Sigmoid colon (tissue), 7 donors: ENCODE measurements at regions of chr19 and their contacts with region 1.

Region 1: DNA sequence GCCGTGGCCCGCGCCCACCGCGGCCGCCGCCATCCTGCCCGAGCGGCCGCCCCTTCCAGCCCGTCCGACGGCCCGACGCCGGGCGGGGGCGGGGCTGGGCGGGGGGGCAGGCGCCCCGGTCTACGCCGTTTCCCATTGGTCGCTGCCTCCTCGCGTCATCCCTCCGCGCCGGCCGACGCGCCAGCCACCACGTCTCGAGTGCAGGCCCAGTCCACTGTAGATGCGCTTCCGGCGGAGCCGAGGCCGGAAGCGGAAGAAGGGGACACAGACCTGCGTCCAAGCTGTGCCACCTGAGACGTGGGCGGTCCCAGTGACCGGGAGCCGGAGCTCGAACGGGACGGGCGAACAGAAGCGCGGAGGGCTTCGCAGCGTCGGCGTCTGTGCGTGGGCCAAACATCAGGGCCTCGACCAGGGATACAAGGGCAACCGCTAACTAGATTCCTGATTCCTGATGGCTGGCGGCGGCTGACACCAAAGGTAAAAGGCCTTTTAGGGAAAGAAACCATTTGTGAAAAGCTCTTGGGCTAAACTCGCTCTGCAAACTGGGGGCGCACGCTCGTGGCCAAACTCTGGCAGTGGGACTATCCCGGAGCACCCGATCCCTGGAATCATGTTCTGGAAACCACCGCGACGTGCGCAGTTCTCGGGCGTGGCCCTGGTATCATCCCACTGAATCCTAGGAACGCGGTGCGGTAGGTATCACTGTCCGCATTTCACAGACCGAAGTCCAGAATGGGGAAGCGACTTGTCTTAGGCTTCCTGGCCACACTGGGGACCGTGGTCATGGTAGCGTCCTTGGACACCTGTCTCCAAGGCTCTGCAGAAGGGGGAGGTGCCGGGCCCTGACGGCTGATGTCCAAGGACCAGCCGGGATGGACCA is at the start of gene SLC35E1:
- DNase-seq: peak; percentile 98
- H3K4me3 ChIP-seq: peak within 1 kb of the TSS; percentile 69 to 97 (median 92)
- H3K27ac ChIP-seq: peak within 1 kb of the TSS; percentile 83 to 92 (median 89)
- H3K4me1 ChIP-seq: peaks cover 0 to 44% (median 37%) of the 10 kb centered on the region in 4 donors
- H3K27me3 ChIP-seq: no peaks in the 10 kb centered on the region
- CTCF ChIP-seq: no peak
- EP300 ChIP-seq: peak in 1 of 4 donors; percentile 79
- POLR2A ChIP-seq: peak; percentile 80
- total RNA-seq, gene SLC35E1: 20.3 to 27.4 (median 23.1) TPM

Region 2: DNA sequence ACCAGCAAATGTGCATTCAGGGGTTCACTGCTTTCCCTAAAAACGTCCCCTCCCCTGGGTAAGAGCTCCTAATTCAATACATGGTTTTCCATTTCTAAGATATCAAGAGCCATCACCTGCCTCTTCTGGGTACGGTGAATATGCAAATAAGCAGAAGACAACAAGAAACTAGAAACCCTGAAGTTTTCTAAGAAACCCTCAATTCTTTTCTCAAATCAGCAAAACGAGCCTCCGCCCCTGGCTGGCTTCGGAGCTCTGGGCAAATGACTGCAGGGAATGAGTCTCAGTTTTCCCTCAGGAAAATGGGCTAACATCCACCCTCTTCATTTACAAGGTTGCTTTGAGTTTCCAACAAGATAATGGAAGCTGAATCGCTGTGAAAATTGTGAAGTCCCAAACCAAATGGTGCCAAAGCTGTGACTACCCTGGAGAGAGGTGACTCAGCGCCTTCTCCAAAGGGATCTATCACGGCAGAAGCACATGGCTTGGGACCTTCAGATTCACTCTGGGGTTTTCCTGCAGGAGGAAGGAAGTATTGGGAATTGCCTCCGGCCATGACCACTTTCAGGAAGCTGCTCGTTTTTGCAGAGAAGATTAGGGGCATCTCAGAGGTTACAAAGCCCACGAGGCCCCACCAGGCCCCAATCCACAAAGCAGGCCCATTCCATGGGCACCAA is 221.3 kb before region 1 on chr19:
- intact Hi-C with region 1: no loop called
- DNase-seq: no peak
- H3K4me3 ChIP-seq: no peak overlapping the region
- H3K27ac ChIP-seq: no peak overlapping the region
- H3K4me1 ChIP-seq: no peaks in the 10 kb centered on the region
- H3K27me3 ChIP-seq: no peaks in the 10 kb centered on the region
- CTCF ChIP-seq: no peak
- EP300 ChIP-seq: no peak
- POLR2A ChIP-seq: no peak

Region 3: DNA sequence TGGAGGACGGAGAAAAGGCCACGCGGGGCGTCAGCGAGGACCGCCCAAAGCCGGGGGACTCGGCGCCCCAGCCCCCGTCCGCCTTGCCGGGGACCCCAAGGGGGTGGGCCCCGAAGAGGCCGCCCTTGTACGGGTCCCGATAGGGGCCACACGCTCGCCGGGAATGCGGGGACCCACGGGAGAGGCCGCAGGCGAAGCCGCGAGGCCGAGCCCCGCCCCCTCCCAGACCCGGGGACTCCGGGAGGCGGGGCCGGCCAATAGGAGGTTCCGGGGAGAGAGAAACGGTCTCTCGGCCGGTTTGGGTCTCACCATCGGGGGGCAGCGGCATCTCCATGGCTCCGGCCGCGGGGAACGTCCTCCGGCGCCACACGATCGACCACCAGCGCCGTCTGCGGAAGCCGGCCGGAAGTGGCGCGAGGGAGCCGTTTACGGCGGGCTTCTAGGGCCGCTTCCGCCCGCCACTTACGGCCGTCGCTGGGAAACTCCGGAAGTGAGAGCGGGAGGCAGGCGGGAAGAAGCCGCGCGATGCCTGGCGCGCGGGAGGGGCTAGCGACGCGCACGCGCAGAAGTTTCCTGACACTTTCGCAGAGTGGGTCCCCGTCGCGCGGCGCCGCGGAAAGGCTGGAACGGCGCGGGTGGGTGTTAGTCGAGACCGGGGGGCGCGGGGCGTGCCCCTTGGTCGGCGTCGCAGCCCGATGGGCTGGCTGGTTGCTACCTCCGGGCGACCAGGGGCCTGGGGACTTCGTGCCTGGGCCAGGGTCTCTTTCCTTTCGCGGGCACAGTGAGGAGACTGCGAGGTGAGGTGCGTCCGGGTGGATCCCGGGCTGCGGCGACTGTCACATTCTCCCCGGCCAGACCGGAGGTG is 30.3 kb before region 1 on chr19 and contains the start of gene CHERP:
- intact Hi-C with region 1: loop called (anchors 2 kb)
- DNase-seq: peak; percentile 96
- H3K4me3 ChIP-seq: peak within 1 kb of the TSS; percentile 75 to 86 (median 78)
- H3K27ac ChIP-seq: peak within 1 kb of the TSS; percentile 86 to 93 (median 88)
- H3K4me1 ChIP-seq: peaks cover 0 to 63% (median 49%) of the 10 kb centered on the region in 4 donors
- H3K27me3 ChIP-seq: no peaks in the 10 kb centered on the region
- CTCF ChIP-seq: no peak
- EP300 ChIP-seq: peak in 1 of 4 donors; percentile 70
- POLR2A ChIP-seq: peak; percentile 70 to 79
- total RNA-seq, gene CHERP: 5.6 to 8.6 (median 6.6) TPM

Region 4: GRCh38 chr19:16608290-16608739 is 35.7 kb after region 1 on chr19:
- intact Hi-C with region 1: loop called (anchors 5 kb)
- DNase-seq: peak; percentile 93
- H3K4me3 ChIP-seq: no peak overlapping the region
- H3K27ac ChIP-seq: peak overlapping the region; percentile 73 to 89 (median 85)
- H3K4me1 ChIP-seq: peaks cover 0 to 80% (median 70%) of the 10 kb centered on the region in 4 donors
- H3K27me3 ChIP-seq: no peaks in the 10 kb centered on the region
- CTCF ChIP-seq: no peak
- EP300 ChIP-seq: peak; percentile 80 to 97 (median 88)
- POLR2A ChIP-seq: no peak

Region 5: DNA sequence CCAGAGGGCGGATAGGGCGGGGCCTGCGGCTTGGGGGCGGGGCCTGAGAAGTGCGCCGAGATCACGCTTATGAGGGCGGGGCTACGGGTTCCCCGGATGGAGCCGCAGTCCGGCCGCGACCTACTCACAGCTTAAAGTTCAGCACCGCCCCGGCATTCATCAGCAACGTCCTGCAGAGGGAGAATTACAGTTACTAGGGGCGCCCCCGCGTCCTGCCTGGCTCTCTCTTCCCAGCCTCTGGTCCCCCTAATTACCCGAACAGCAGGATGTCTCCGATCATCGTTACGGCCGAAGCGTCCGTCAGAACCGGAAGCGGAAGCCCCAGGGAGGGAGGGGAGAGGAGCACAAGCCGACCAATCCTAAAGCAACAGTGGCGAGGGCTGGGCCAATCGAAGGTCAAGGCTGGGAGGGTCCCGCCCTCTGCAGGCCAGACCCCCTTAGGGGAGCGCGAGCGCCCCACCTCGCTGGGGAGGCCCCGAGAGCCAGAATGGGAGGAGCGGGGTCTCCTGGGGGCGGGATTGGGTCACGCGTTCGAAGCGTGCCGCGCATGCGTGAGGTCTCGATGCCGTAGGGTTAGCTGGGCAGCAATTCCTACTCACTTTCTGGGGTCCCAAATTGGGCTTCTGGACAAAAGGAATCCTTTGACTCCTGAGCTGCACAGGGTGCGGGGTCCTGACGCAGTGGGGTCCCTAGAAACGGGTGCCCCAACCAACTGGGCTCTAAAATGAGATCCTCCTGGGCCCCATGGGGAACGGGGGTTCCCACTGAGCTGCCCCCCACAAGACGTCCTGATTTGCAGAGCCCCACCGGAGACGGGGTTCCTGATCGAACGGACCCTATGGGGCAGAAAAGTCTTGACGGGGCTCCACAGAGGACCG is 87.5 kb after region 1 on chr19 and contains the start of gene SMIM7:
- intact Hi-C with region 1: loop called (anchors 5 kb)
- DNase-seq: peak; percentile 99
- H3K4me3 ChIP-seq: peak within 1 kb of the TSS; percentile 70 to 84 (median 80)
- H3K27ac ChIP-seq: peak within 1 kb of the TSS; percentile 91 to 94 (median 94)
- H3K4me1 ChIP-seq: peaks cover 0 to 42% (median 33%) of the 10 kb centered on the region in 4 donors
- H3K27me3 ChIP-seq: no peaks in the 10 kb centered on the region
- CTCF ChIP-seq: no peak
- EP300 ChIP-seq: peak in 1 of 4 donors; percentile 39
- POLR2A ChIP-seq: peak; percentile 89 to 95
- total RNA-seq, gene SMIM7: 65.2 to 110 (median 86.2) TPM